ENCODE measurements at regions of chr6 and their contacts with region 1.

Region 1: DNA sequence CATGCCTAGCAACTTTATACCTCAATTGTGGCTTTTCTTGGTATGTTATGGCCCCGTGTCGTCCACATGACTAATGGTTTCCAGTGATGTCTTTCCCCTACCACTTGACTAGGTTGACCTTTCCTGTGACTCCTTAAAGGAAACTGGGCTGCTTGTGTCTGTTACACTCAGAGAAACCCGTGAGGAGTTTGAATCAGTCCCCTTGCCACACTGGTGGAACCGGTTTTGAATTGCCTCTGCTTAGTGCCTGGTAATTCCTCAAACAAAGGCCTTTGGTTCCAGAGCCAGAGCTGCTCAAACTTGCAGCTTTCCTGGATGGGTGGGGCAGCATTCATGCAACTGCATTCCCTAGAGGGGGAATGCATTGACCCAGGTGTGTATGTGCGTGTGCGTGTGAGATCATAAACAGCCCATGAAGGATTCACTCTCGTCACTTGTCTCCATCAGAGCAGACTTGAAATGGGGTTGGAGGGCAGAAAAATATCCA is 22.0 kb downstream of the ECT2L start:
- DNase-seq: no peak
- CTCF ChIP-seq: no peak

Region 2: DNA sequence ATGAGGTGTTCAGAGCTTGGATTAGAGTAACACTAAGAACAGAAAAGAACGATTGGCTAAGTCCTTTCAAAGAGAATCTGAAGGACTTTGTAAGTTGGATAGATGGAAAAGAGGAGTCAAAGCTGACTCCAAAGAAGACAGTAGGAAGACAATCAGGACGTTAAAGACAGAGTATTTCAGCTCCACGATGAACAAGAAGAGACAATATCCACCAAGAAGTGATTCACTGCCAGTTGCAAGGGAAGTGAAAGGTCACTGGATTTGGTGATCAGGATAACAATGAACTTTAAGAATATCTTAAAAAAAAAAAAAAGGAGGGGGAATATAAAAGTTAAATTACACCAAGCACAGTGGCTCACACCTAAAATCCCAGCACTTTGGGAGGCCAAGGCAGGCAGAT is 152.3 kb after region 1 on chr6:
- in situ Hi-C with region 1: no loop called
- DNase-seq: no peak
- CTCF ChIP-seq: no peak

Region 3: DNA sequence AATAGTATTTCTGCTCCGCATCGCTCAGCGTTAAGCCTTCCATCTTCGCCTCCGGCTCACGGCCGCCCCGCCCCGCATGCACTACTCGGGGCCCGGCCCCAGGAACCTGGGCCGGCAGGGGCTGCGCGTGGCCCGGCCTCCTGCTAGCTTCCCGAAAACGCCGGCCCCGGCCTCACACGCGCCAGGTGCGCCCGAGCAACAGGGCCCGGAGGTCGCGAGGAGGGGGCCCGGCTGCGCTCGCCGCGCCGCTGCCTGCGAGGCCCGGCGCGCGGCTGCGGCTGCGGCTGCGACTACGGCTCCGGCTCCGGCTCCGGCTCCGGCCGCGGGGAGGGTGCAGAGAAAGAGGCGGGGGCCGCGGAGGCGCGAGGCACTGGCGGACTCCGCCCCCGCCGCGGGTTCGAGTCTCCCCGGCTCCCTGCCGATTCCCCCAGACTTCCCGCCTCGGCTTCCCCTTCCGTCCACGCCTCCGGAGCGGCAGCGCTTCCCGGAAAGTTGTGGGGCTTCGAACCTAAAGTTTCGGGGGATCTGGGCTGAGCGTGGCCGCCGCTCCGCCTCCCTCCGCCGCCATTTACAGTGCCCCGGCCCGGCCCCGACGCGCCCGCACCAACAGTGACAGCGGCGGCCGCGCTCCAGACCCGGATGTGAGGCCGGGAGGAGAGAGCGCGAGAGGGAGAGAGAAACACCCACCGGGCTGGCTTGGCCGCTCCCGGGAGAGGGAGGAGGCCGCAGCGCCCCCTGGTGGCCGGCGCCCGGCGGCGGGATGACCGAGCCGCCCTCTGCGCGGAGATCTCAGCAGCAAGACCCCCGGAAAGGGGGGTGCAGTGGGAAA is 170.0 kb after region 1 on chr6 and contains the start of gene REPS1:
- in situ Hi-C with region 1: loop called (anchors 5 kb)
- DNase-seq: peak; percentile 96
- CTCF ChIP-seq: peak; percentile 93

Region 4: DNA sequence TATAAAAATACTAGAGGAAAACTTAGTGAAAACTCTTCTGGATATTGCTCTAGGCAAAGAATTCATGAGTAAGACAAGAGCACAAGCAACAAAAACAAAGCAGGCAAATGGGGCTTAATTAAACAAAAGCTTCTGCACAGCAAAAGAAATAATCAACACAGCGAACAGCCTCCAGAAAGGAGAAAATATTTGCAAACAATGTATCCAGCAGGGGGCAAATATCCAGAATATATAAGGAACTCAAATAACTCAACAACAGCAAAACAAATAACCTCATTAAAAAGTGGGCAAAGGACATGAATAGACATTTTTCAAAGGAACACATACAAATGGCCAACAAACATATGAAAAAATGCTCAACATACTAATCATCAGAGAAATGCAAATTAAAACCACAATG is 299.9 kb after region 1 on chr6:
- in situ Hi-C with region 1: loop called (anchors 10 kb)
- DNase-seq: no peak
- CTCF ChIP-seq: no peak

Region 5: GRCh38 chr6:139375232-139376016 is 557.6 kb after region 1 on chr6:
- in situ Hi-C with region 1: loop called (anchors 25 kb)
- DNase-seq: peak; percentile 74
- CTCF ChIP-seq: no peak

Measured in GM13977 (cell line).